OCI-LY7 (cell line): ENCODE measurements at regions of chr2 and their contacts with region 1.

Region 1: DNA sequence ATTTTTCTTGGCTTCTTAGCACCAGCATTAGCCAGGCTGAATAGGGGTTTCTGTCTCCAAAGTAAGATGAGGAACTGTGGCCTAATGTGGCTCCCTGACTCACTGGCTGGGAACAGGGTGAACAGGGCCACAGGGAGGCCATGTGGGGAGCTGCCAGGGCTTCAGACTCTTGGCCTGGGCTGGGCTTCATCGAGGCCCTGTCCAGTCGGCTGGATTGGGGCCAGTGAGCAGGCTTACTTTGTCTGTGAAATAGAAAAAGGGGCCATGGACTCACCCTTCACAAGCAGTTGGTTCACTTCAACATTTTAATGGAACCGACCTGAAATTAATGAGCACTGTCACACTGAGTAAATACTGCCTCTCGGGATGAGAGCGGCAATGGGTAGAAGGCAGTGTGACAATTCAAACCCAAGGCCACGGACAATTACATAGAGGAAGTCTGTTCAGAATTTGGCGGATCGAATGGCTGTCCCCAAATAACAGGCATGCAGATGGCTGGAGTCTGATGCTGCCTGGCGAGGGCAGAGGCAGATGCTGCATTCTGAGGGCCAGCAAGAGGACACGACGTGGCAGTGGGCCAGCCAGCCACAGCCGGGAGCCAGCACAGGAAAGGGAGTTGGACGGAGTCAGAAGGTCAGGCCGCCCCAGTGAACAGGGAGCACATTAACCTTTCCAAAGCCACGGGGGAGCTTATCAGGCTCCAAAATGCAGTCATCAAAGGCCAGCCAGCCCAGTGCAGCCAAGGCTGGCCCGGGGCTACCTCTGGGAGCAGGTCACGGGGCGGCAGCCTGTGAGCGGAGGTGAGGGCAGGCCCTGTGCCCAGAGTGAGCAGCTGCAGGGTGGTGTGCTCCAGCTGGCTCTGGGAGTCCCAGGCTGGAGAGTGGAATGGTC is 146.6 kb upstream of the REV1 start:
- DNase-seq: peak; percentile 41
- H3K4me3 ChIP-seq: peak overlapping the region; percentile 53
- H3K27ac ChIP-seq: peak overlapping the region; percentile 99
- H3K4me1 ChIP-seq: peaks cover 72% of the 10 kb centered on the region
- CTCF ChIP-seq: no peak

Region 2: DNA sequence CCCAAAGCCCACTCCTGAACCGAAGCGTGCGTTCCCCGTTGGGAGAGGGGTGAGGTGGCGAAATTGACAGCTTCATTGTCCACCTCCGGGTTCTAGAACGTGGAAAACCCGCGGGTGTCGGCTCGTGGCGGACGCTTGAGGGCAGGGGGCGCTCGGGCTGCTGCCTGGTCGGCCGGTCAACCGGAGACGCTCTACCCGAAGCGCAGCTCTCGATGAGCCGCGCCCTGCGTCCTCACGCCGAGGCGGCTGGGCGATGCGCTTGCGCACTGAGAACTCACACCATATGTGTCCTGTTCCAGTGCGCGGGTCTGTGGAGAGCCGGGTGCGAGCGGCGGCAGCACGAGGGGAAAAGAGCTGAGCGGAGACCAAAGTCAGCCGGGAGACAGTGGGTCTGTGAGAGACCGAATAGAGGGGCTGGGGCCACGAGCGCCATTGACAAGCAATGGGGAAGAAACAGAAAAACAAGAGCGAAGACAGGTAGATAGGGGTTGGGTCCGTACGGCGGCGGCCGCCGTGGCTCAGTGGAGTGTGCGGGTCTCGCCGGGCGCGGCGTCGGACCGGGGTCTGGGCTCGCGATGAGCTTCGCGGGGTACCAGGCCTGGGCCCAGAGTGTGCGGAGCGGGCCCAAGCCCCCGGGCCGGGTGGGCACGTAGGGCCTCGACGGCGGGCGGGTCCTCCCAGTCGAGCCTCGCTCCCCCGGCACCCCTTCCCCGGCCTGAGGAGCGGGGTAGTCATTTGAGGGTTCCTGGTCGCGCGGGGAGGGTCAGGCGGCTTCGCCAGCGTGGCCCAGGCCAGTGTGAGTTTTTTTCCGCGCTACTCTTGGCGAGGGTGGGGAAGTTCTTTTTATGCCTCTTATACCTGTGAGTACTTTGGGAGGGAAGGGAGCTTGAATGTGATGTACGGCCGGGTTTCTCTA is 299.0 kb before region 1 on chr2 and contains the start of gene EIF5B:
- CTCF ChIA-PET with region 1: no interaction called
- POLR2A ChIA-PET with region 1: no interaction called
- intact Hi-C with region 1: loop called (anchors 2 kb)
- DNase-seq: peak; percentile 98
- H3K4me3 ChIP-seq: peak within 1 kb of the TSS; percentile 86
- H3K27ac ChIP-seq: peak within 1 kb of the TSS; percentile 83
- H3K4me1 ChIP-seq: peaks cover 33% of the 10 kb centered on the region
- CTCF ChIP-seq: peak; percentile 87
- total RNA-seq, gene EIF5B: 19.9 and 28.7 TPM in 2 replicates

Region 3: DNA sequence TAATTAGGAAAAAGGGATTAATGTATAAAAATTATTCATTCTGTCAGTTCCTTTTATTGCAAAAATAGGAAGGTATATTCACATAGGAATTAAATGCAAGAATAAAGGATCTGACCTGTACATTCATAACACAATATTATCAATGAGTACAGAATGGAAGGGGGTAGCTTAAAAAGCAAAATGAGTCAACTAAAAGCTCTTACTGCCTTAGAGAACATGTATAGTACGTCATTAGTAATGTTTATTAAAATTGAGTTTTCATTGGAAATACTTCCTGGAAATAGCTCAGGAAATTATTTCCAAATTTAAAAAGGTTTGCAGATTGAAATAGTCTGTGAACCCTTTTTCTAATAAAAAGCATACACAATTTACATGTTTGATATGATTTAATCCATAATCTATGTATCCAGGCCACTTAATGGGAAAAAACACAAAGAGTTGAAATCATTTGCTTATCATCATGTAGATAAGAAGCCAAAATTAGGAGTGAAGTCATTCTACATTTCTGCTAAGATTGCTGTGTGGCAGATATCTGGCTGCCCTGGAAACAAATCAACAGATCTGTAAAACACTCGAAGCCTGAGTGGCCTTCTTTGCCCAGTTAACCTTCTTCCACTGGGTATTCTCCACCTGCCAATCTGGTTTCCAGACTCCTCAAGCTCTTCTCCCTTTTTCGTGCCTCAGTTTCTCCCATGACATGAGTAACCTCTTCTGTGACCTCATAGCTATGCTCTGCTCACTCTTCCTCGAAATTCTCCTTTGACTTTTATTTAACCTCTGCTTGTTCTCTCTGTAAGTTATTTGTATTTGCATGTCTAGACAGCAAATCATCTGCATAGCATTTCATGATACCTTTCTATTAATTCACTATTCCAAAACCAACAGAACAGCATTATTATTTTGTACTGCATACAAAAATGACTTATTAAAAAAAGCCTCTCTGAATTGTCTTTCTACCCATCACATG is 34.7 kb after region 1 on chr2:
- CTCF ChIA-PET with region 1: no interaction called
- POLR2A ChIA-PET with region 1: no interaction called
- intact Hi-C with region 1: loop called (anchors 2 kb)
- DNase-seq: no peak
- H3K4me3 ChIP-seq: peak overlapping the region; percentile 27
- H3K27ac ChIP-seq: peak overlapping the region; percentile 79
- H3K4me1 ChIP-seq: peaks cover 40% of the 10 kb centered on the region
- CTCF ChIP-seq: no peak

Region 4: GRCh38 chr2:99864561-99865553 is 228.5 kb after region 1 on chr2:
- CTCF ChIA-PET with region 1: no interaction called
- POLR2A ChIA-PET with region 1: no interaction called
- intact Hi-C with region 1: loop called (anchors 5 kb)
- DNase-seq: no peak
- H3K4me3 ChIP-seq: no peak overlapping the region
- H3K27ac ChIP-seq: no peak overlapping the region
- H3K4me1 ChIP-seq: peaks cover 68% of the 10 kb centered on the region
- CTCF ChIP-seq: no peak

Region 5: GRCh38 chr2:99974275-99974674 is 337.9 kb after region 1 on chr2:
- CTCF ChIA-PET with region 1: no interaction called
- POLR2A ChIA-PET with region 1: no interaction called
- intact Hi-C with region 1: no loop called
- DNase-seq: no peak
- H3K4me3 ChIP-seq: no peak overlapping the region
- H3K27ac ChIP-seq: no peak overlapping the region
- H3K4me1 ChIP-seq: no peaks in the 10 kb centered on the region
- CTCF ChIP-seq: no peak

Region 6: GRCh38 chr2:100562732-100563720 is 926.6 kb after region 1 on chr2 and contains the start of gene PDCL3:
- CTCF ChIA-PET with region 1: no interaction called
- POLR2A ChIA-PET with region 1: no interaction called
- intact Hi-C with region 1: loop called (anchors 5 kb)
- DNase-seq: peak; percentile 98
- H3K4me3 ChIP-seq: peak within 1 kb of the TSS; percentile 79
- H3K27ac ChIP-seq: peak within 1 kb of the TSS; percentile 79
- H3K4me1 ChIP-seq: peaks cover 19% of the 10 kb centered on the region
- CTCF ChIP-seq: 0 out of 2 replicates have a peak, but pooled peaks have one; percentile 3
- total RNA-seq, gene PDCL3: 10.6 and 12.3 TPM in 2 replicates